AG04449 (cell line): ENCODE measurements at regions of chr15 and their contacts with region 1.

Region 1: GRCh38 chr15:40217159-40217824 is 21.6 kb upstream of the PAK6 start:
- DNase-seq: peak; percentile 12
- H3K4me3 ChIP-seq: no peak overlapping the region
- CTCF ChIP-seq: peak; percentile 60

Region 2: DNA sequence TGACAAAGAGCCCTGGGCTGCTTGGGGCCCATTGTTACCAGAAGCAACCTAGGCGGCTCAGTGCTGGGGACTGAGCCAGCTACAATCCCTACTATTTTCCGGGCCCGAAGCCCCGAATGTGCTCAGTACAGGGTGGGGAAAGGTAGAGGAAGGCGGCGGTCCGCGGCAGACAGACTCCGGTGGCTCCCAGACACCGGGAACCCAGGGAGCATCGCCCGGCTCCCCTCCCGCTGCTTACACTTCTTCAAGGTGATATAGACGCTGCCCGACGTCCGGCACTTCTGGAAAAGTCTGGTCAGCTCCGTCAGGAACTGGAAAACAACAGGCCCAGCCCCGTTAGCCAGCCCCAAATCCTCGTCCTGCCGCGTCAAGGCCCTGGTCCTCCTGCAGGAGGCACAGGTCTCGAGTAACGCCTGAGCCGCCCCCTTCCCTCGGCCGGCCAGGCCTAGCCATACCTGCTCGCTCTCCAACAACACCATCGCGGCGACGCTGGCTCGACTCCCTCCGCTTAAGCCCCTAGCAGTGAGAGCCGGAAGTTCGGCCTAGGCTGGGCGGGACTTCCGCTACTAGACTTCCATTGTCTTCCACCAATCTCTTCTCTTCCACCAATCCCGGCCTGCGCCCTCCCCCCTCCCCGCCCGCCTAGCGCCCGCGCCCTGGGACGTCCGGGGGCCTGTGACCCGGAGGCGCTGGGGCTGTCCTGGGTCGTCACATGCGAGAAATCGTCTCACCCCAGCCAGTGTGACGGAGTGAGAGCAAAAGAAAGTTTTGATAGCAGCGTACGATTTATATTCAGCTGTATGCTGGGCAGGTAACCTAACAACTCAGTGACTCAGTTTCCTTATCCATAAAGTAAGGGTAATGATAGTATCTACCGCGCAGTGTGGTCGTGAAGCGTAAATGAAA is 178.4 kb before region 1 on chr15 and contains the start of gene SRP14:
- CTCF ChIA-PET with region 1: interaction called, 17 read pairs
- POLR2A ChIA-PET with region 1: no interaction called
- DNase-seq: no peak
- H3K4me3 ChIP-seq: peak within 1 kb of the TSS; percentile 95
- CTCF ChIP-seq: no peak

Region 3: GRCh38 chr15:40190591-40190990 is 26.7 kb before region 1 on chr15:
- CTCF ChIA-PET with region 1: interaction called, 11 read pairs
- POLR2A ChIA-PET with region 1: no interaction called
- DNase-seq: no peak
- H3K4me3 ChIP-seq: no peak overlapping the region
- CTCF ChIP-seq: no peak

Region 4: DNA sequence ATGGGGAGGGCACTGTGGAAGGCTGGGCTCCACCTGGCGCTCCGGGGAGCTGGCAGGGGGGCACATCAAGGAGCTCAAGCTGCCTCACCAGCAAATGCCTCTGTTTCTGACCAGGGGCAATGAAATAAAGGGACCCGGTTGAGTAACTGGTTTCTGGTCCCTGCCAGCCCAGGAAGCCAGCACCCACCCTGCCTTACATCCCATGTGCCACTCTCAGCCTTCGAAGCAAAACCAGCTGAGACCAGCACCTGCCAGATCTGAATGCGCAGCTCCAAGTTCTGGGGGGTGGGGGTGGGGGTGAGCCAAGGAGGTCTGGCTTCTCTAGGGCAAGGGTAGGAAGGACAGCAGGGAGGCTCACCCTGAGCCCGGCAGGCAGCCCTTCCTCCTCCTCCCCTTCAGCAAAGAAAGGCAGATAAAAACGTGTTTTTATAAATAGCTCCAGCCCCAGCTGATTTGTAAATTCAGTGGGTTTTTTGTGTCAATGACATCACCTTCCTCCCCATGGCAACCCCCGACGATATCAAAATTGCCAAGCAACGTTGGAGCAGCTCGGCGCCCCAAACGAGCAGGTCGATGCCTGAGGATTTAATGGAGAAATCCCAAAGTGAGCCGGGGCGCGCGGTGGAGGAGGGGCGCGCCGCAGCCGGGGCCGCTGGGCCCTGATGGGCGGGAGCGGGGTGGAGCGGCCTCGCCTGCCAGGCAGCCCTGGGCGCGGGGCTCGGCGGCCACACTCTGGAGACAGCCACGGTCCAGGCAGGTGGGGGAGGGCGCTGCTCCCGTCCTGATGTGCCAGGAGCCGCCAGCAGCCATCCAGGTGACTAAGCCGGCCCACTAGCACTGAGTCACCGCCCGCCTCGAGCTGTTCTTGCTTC is 21.5 kb after region 1 on chr15 and contains the start of gene PAK6:
- CTCF ChIA-PET with region 1: interaction called, 58 read pairs
- POLR2A ChIA-PET with region 1: no interaction called
- DNase-seq: no peak
- H3K4me3 ChIP-seq: peak within 1 kb of the TSS; percentile 48
- CTCF ChIP-seq: no peak

Region 5: DNA sequence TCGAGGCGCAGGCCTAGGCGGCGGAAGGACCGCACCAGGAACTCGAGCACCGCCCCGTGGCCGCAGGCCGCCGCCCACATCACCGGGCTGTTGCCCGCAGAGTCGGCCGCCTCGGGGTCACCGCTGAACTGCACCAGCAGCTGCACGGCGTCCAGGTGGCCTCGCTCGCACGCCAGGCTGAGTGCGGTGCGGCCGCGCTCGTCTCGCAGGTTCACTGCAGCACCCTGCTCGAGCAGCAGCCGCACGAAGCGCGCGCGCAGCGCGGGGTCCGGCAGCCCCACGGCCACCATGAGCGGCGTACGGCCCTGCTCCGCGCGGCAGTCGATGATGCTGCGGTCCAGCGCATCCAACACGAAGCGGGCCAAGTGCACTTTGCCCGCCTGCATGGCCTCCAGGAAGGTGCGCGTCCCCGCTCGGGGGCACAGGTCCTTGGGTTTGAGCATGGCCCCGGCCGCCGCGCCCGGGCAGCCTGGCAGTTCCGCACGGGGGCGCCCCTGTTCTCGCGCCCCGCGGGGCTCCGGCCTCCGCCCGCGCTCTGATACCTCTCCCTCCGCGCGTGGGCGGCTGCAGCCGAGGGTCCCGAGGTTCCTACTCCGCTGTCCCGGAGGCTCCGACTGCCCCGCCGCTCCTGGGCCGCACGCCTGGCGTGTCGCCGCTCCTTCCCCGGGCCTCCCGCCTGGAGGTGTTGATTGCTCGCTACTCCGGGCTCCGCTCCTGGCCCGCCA is 65.0 kb after region 1 on chr15:
- CTCF ChIA-PET with region 1: interaction called, 1,718 read pairs
- POLR2A ChIA-PET with region 1: no interaction called
- DNase-seq: no peak
- H3K4me3 ChIP-seq: peak overlapping the region; percentile 40
- CTCF ChIP-seq: peak; percentile 34

Region 6: GRCh38 chr15:40323239-40323952 is 106.1 kb after region 1 on chr15 and contains the start of gene INAFM2:
- CTCF ChIA-PET with region 1: interaction called, 17 read pairs
- POLR2A ChIA-PET with region 1: no interaction called
- DNase-seq: no peak
- H3K4me3 ChIP-seq: peak within 1 kb of the TSS; percentile 73
- CTCF ChIP-seq: peak; percentile 70